ENCODE measurements at regions of chr4 and their contacts with region 1.

Region 1: DNA sequence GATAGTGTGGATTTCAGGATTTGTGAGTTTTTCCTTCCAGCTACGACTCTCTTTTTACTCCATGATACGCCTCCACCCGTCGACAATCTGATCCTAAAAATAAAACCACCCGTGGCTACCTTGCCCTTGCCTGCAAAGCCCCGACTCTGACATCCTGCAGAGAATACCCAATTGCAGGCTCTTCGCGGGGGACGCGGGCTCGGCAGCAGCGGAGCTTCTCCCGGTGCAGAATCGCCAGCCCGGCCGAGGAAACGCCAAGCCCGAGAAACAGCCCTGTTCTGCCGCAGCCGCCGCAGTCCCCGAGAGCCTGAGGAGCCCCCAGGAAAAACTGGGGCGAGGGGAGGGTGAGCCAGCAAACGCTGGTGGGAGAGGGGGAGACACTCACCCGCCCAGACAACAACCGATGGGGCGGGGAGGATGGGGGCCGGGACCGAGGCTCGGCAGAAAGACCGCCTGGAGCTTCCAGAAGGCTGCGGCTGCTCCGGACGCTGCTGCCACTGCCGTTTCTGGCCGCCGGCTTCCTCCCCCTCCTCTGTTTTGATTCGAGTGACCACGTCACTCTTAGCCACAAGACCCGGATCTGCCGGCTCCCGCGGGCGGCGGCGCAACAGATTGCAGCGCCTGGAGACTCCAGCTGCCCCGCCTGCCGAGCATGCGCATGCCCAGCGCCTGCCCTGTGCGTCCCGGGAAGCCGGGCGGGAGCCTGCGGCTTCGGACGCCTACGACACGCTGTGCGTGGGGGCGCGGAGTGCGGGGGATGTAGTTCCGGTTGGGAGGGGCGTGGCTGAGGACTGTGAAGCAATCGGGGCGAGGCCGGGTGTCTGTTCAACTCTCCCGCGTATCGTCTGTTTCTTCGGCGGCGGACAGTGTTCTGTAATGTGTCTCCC is at the start of gene SMIM14:
- DNase-seq: peak; percentile 99 to 100
- ATAC-seq: peak; percentile 96 to 99 (median 98)
- H3K4me3 ChIP-seq: peak within 1 kb of the TSS; percentile 99
- H3K27ac ChIP-seq: peak within 1 kb of the TSS; percentile 100
- H3K4me1 ChIP-seq: peaks cover 32% of the 10 kb centered on the region
- H3K27me3 ChIP-seq: no peaks in the 10 kb centered on the region
- CTCF ChIP-seq: peak; percentile 12
- total RNA-seq, gene SMIM14: 4.2 to 7.7 (median 6.5) TPM

Region 2: GRCh38 chr4:39458505-39459300 is 179.9 kb before region 1 on chr4 and contains the starts of genes LIAS and RPL9:
- intact Hi-C with region 1: loop called in 1 of 2 experiments (anchors 5 kb)
- DNase-seq: peak; percentile 95 to 98
- ATAC-seq: peak; percentile 95 to 96 (median 96)
- H3K4me3 ChIP-seq: peak within 1 kb of the TSS; percentile 100
- H3K27ac ChIP-seq: peak within 1 kb of the TSS; percentile 99
- H3K4me1 ChIP-seq: peaks cover 24% of the 10 kb centered on the region
- H3K27me3 ChIP-seq: no peaks in the 10 kb centered on the region
- CTCF ChIP-seq: no peak
- total RNA-seq, gene LIAS: 16.2 to 25.6 (median 17.6) TPM
- total RNA-seq, gene RPL9: 544 to 925 (median 746) TPM

Region 3: GRCh38 chr4:39527273-39528060 is 111.1 kb before region 1 on chr4 and contains the start of gene UGDH:
- intact Hi-C with region 1: loop called (anchors 2 to 5 kb)
- DNase-seq: peak; percentile 97 to 98
- ATAC-seq: peak; percentile 98 to 99 (median 98)
- H3K4me3 ChIP-seq: peak within 1 kb of the TSS; percentile 81
- H3K27ac ChIP-seq: peak within 1 kb of the TSS; percentile 94
- H3K4me1 ChIP-seq: peaks cover 25% of the 10 kb centered on the region
- H3K27me3 ChIP-seq: no peaks in the 10 kb centered on the region
- CTCF ChIP-seq: no peak
- total RNA-seq, gene UGDH: 7.7 to 9.8 (median 8.9) TPM

Region 4: DNA sequence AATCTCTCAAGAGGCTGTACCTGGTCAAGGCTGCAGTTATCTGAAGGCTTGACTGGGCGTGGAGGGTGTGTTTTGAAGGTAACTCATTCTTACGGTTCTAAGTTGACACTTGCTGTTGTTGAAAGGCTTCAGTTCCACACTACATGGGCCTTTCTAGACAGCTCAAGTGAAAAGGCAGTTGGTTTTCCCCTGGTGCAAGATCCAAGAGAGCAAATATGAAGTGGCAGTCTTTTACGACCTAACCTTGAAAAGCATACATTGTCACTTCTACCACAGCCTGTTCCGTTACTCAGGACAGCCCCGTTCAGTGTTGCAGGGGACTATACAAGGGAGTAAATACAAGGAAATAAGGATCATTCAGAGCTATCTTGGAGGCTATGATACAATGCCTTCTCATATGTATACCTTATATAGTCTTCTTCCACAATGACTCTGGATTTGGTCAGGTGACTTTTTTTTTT is 292.9 kb after region 1 on chr4:
- intact Hi-C with region 1: no loop called
- DNase-seq: no peak
- ATAC-seq: no peak
- H3K4me3 ChIP-seq: no peak overlapping the region
- H3K27ac ChIP-seq: no peak overlapping the region
- H3K4me1 ChIP-seq: peaks cover 17% of the 10 kb centered on the region
- H3K27me3 ChIP-seq: no peaks in the 10 kb centered on the region
- CTCF ChIP-seq: no peak

Measured in psoas muscle (tissue), 8 donors.